Activated CD8-positive, alpha-beta T cell treated with anti-CD3 and anti-CD28 coated beads for 36 hours (primary cell): ENCODE measurements at regions of chr7 and their contacts with region 1.

Region 1: GRCh38 chr7:150876817-150877526 is 24.7 kb downstream of the AOC1 start:
- DNase-seq: peak; percentile 41
- ATAC-seq: no peak
- H3K4me3 Mint-ChIP-seq: no peak overlapping the region
- H3K27ac Mint-ChIP-seq: no peak overlapping the region
- H3K4me1 Mint-ChIP-seq: peaks cover 14% of the 10 kb centered on the region
- H3K27me3 Mint-ChIP-seq: peaks cover 3% of the 10 kb centered on the region
- CTCF ChIP-seq: no peak

Region 2: DNA sequence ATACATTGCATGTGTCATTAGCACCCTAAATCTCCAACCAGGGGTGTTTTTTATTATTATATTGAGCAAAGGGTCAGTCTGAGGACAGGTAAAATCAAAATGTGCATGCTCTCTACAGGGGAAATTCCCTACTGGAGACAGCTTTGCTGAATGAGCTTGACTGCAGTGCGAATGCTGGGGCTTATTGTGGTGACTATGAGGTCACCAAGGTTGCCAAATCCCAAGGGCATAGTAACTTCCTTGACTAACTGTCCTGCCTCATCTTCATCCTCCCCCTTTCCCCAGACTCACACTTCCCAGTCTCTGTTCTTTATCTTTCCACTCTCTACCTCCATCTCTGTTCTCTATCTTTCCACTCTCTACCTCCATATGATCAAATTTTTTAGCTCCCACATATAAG is 47.6 kb before region 1 on chr7:
- CTCF ChIA-PET with region 1: no interaction called
- POLR2A ChIA-PET with region 1: no interaction called
- intact Hi-C with region 1: no loop called
- DNase-seq: no peak
- ATAC-seq: no peak
- H3K4me3 Mint-ChIP-seq: no peak overlapping the region
- H3K27ac Mint-ChIP-seq: no peak overlapping the region
- H3K4me1 Mint-ChIP-seq: no peaks in the 10 kb centered on the region
- H3K27me3 Mint-ChIP-seq: peaks cover 29% of the 10 kb centered on the region
- CTCF ChIP-seq: no peak

Region 3: DNA sequence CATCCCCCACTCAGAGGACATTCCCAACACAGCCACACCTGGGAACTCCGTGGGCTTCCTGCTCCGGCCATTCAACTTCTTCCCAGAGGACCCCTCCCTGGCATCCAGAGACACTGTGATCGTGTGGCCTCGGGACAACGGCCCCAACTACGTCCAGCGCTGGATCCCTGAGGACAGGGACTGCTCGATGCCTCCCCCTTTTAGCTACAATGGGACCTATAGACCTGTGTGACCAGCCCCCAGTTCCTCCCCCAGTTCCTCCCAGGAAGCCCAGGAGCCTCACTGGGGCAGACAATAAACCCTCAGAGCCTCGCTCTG is 16.0 kb before region 1 on chr7:
- CTCF ChIA-PET with region 1: interaction called, 55 read pairs
- POLR2A ChIA-PET with region 1: no interaction called
- intact Hi-C with region 1: no loop called
- DNase-seq: no peak
- ATAC-seq: no peak
- H3K4me3 Mint-ChIP-seq: no peak overlapping the region
- H3K27ac Mint-ChIP-seq: no peak overlapping the region
- H3K4me1 Mint-ChIP-seq: no peaks in the 10 kb centered on the region
- H3K27me3 Mint-ChIP-seq: peaks cover 3% of the 10 kb centered on the region
- CTCF ChIP-seq: no peak

Region 4: DNA sequence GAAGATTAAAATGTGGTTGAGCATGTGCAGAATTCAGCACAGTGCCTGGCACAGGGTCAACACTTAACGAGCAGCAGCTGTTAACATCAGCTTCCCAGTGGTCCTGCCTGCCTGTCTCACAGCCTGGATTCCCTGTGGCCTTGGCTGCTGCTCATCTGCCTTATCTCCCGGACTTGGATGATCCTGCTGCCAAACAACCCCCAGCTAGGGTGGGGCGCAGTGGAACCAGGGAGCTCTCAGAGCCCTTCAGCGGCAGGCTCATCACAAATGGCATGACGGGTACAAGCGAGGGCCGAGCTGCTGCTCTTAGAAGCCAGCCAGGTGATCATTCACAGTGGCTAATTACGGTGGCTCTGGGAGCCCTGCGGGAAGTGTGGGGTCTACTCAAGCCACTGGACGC is 384.6 kb after region 1 on chr7:
- CTCF ChIA-PET with region 1: no interaction called
- POLR2A ChIA-PET with region 1: no interaction called
- intact Hi-C with region 1: no loop called
- DNase-seq: no peak
- ATAC-seq: no peak
- H3K4me3 Mint-ChIP-seq: no peak overlapping the region
- H3K27ac Mint-ChIP-seq: no peak overlapping the region
- H3K4me1 Mint-ChIP-seq: no peaks in the 10 kb centered on the region
- H3K27me3 Mint-ChIP-seq: no peaks in the 10 kb centered on the region
- CTCF ChIP-seq: no peak